CD8-positive, alpha-beta memory T cell (primary cell): ENCODE measurements at regions of chr1 and their contacts with region 1.

Region 1: GRCh38 chr1:86499987-86500593 is 31.4 kb downstream of the CLCA1 start:
- DNase-seq: peak in 2 of 5 donors; percentile 66
- H3K4me3 ChIP-seq: no peak overlapping the region
- H3K4me3 Mint-ChIP-seq: no peak overlapping the region
- H3K27ac ChIP-seq: no peak overlapping the region
- H3K27ac Mint-ChIP-seq: no peak overlapping the region
- H3K4me1 ChIP-seq: no peaks in the 10 kb centered on the region
- H3K4me1 Mint-ChIP-seq: peaks cover 10 to 21% (median 12%) of the 10 kb centered on the region in 3 donors
- H3K27me3 ChIP-seq: no peaks in the 10 kb centered on the region
- H3K27me3 Mint-ChIP-seq: peaks cover 15 to 29% of the 10 kb centered on the region in 2 donors

Region 2: GRCh38 chr1:86380257-86380861 is 119.7 kb before region 1 on chr1:
- CTCF ChIA-PET with region 1: interaction called, 28 read pairs
- POLR2A ChIA-PET with region 1: interaction called, 4 read pairs
- DNase-seq: peak in 2 of 5 donors; percentile 44 to 49
- H3K4me3 ChIP-seq: no peak overlapping the region
- H3K4me3 Mint-ChIP-seq: peak overlapping the region in 1 of 7 donors; percentile 29
- H3K27ac ChIP-seq: no peak overlapping the region
- H3K27ac Mint-ChIP-seq: no peak overlapping the region
- H3K4me1 ChIP-seq: no peaks in the 10 kb centered on the region
- H3K4me1 Mint-ChIP-seq: peaks cover 17 to 28% (median 27%) of the 10 kb centered on the region in 3 donors
- H3K27me3 ChIP-seq: no peaks in the 10 kb centered on the region
- H3K27me3 Mint-ChIP-seq: no peaks in the 10 kb centered on the region

Region 3: GRCh38 chr1:86395771-86396497 is 104.2 kb before region 1 on chr1 and contains the start of gene ODF2L:
- CTCF ChIA-PET with region 1: interaction called, 10 read pairs
- POLR2A ChIA-PET with region 1: interaction called, 3 read pairs
- DNase-seq: peak; percentile 83 to 93 (median 89)
- H3K4me3 ChIP-seq: peak within 1 kb of the TSS; percentile 79
- H3K4me3 Mint-ChIP-seq: peak within 1 kb of the TSS; percentile 95 to 100 (median 98)
- H3K27ac ChIP-seq: peak within 1 kb of the TSS; percentile 81
- H3K27ac Mint-ChIP-seq: peak within 1 kb of the TSS; percentile 85 to 99 (median 98)
- H3K4me1 ChIP-seq: peaks cover 21% of the 10 kb centered on the region
- H3K4me1 Mint-ChIP-seq: peaks cover 56 to 68% (median 59%) of the 10 kb centered on the region in 3 donors
- H3K27me3 ChIP-seq: no peaks in the 10 kb centered on the region
- H3K27me3 Mint-ChIP-seq: no peaks in the 10 kb centered on the region
- total RNA-seq, gene ODF2L: 27.6 to 30.1 TPM

Region 4: DNA sequence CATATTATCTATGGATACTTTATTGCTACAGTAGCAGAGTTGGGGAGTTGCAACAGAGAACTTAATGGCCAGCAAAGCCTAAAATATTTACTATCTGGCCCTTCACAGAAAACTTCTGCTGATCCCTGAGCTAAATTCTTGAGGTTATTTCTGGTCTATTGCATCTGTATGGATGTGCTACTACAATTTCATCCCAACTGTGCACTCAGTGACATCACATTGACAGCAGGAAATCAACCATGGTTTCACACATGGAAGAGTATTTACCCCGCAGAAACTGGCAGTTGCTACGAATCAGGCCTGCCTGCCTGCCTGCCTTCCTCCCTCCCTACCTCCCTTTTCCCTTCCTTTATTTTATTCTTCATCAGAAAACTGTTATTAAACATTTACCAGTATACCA is 64.0 kb before region 1 on chr1:
- CTCF ChIA-PET with region 1: interaction called, 10 read pairs
- POLR2A ChIA-PET with region 1: interaction called, 4 read pairs
- DNase-seq: no peak
- H3K4me3 ChIP-seq: no peak overlapping the region
- H3K4me3 Mint-ChIP-seq: no peak overlapping the region
- H3K27ac ChIP-seq: no peak overlapping the region
- H3K27ac Mint-ChIP-seq: no peak overlapping the region
- H3K4me1 ChIP-seq: no peaks in the 10 kb centered on the region
- H3K4me1 Mint-ChIP-seq: no peaks in the 10 kb centered on the region
- H3K27me3 ChIP-seq: no peaks in the 10 kb centered on the region
- H3K27me3 Mint-ChIP-seq: peaks cover 18 to 42% of the 10 kb centered on the region in 2 donors

Region 5: DNA sequence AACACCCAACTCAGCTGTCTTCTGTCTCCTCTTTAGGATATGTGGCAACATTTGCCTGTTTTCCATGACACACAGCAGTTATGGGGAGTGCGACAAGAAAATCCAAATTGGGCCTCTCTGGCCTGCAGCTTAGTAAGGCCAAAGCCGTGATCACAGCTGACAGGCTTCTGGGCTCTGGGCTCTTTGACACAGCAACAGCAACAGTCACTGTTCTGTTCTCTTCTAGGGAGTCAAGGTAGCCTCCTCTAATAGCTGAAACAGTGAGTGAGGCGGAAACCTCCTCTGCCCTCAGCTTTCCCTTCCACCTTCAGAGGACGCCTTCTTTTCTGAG is 12.3 kb before region 1 on chr1:
- CTCF ChIA-PET with region 1: interaction called, 13 read pairs
- POLR2A ChIA-PET with region 1: no interaction called
- DNase-seq: no peak
- H3K4me3 ChIP-seq: no peak overlapping the region
- H3K4me3 Mint-ChIP-seq: no peak overlapping the region
- H3K27ac ChIP-seq: no peak overlapping the region
- H3K27ac Mint-ChIP-seq: no peak overlapping the region
- H3K4me1 ChIP-seq: no peaks in the 10 kb centered on the region
- H3K4me1 Mint-ChIP-seq: no peaks in the 10 kb centered on the region
- H3K27me3 ChIP-seq: no peaks in the 10 kb centered on the region
- H3K27me3 Mint-ChIP-seq: peaks cover 4 to 14% of the 10 kb centered on the region in 2 donors

Region 6: DNA sequence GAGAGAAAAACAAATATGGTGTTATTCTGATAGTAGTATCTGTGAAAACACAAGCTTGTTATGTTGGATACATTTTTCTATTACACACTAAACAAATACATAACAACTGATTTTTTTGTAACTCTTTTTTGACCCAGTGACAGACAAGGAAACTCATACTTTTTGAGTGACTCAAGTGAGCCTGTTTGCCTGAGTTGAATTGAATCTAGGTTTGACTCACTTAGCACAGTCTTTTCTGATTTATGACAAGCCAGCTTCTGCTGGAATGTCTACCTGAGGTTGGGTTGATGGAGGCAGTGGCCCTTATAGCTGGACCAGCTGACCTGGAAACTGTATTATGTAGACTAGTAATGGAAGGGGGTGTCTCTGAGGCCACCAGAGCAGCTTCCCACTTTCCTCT is 42.5 kb after region 1 on chr1:
- CTCF ChIA-PET with region 1: no interaction called
- POLR2A ChIA-PET with region 1: no interaction called
- DNase-seq: no peak
- H3K4me3 ChIP-seq: no peak overlapping the region
- H3K4me3 Mint-ChIP-seq: no peak overlapping the region
- H3K27ac ChIP-seq: no peak overlapping the region
- H3K27ac Mint-ChIP-seq: no peak overlapping the region
- H3K4me1 ChIP-seq: no peaks in the 10 kb centered on the region
- H3K4me1 Mint-ChIP-seq: no peaks in the 10 kb centered on the region
- H3K27me3 ChIP-seq: peaks cover 8% of the 10 kb centered on the region
- H3K27me3 Mint-ChIP-seq: peaks cover 11 to 49% of the 10 kb centered on the region in 2 donors